MCF 10A (cell line): ENCODE measurements at regions of chr2 and their contacts with region 1.

Region 1: DNA sequence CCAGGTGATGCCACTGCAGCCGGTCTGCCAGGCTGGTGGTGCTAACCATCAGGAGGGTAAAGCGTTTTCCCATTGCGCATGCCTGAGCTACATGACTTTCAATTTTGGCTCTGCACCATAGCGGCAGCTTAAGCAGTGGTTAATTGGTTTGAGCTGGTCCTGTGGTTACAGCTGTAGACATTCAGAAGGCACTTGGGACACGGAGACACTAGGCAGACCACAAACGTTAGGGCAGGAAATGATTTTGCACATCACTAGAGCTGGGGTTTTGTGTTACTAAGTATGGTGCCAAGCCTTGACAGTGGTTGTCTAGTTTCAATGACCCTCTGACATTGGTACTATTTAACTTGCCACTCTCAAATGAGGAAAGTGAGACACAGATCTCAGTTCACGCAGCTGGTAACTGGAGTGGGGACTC is 28.9 kb upstream of the CNOT11 start:
- DNase-seq: no peak
- H3K4me3 Mint-ChIP-seq: no peak overlapping the region
- H3K27ac Mint-ChIP-seq: no peak overlapping the region
- H3K4me1 Mint-ChIP-seq: no peaks in the 10 kb centered on the region
- H3K27me3 Mint-ChIP-seq: no peaks in the 10 kb centered on the region
- CTCF ChIP-seq: no peak

Region 2: DNA sequence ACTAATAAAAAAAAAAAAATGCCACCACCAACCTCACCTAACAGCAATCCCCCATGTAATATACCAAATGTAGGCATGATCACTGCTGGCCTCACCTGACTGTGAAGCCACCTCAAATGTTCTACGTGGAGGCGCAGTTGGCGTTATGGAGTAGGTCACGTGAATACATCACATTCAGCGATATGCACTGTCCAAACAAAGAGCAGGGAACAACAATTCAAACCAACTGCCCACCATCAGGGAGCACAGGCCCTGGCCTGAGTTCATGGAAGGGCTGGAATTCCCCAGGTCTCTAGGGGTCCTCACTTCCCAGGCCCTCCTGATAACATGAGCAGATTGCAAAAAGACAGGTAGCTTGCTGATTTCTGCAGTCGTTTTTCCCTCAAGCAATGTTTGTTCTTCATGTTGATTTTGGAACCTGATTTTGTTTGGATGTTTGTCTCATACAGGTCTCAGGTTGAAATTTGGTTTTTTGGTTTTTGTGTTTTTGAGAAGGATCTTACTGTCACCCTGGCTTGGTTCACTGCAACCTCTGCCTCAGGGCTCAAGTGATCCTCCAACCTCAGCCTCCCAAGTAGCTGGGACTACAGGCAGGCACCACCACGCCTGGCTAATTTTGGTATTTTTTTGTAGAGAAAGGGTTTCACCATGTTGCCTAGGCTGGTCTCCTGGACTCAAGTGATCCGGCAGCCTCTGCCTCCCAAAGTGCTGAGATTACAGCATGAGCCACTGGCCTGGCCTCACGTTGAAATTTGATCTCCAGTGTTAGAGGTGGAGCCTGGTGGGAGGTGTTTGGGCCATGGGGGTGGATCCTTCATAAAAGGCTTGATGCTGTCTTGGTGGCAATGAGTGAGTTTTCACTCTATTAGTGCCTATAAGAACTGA is 88.2 kb before region 1 on chr2:
- CTCF ChIA-PET with region 1: no interaction called
- POLR2A ChIA-PET with region 1: no interaction called
- intact Hi-C with region 1: no loop called
- DNase-seq: peak; percentile 67
- H3K4me3 Mint-ChIP-seq: no peak overlapping the region
- H3K27ac Mint-ChIP-seq: no peak overlapping the region
- H3K4me1 Mint-ChIP-seq: peaks cover 38% of the 10 kb centered on the region
- H3K27me3 Mint-ChIP-seq: no peaks in the 10 kb centered on the region
- CTCF ChIP-seq: no peak

Region 3: GRCh38 chr2:101238930-101239759 is 15.3 kb after region 1 on chr2:
- CTCF ChIA-PET with region 1: interaction called, 10 read pairs
- POLR2A ChIA-PET with region 1: interaction called, 3 read pairs
- intact Hi-C with region 1: no loop called
- DNase-seq: peak; percentile 9
- H3K4me3 Mint-ChIP-seq: no peak overlapping the region
- H3K27ac Mint-ChIP-seq: no peak overlapping the region
- H3K4me1 Mint-ChIP-seq: peaks cover 8% of the 10 kb centered on the region
- H3K27me3 Mint-ChIP-seq: no peaks in the 10 kb centered on the region
- CTCF ChIP-seq: no peak

Region 4: GRCh38 chr2:101328474-101329007 is 104.7 kb after region 1 on chr2:
- CTCF ChIA-PET with region 1: no interaction called
- POLR2A ChIA-PET with region 1: no interaction called
- intact Hi-C with region 1: no loop called
- DNase-seq: peak; percentile 16
- H3K4me3 Mint-ChIP-seq: no peak overlapping the region
- H3K27ac Mint-ChIP-seq: no peak overlapping the region
- H3K4me1 Mint-ChIP-seq: no peaks in the 10 kb centered on the region
- H3K27me3 Mint-ChIP-seq: no peaks in the 10 kb centered on the region
- CTCF ChIP-seq: no peak

Region 5: GRCh38 chr2:101558740-101559519 is 335.1 kb after region 1 on chr2:
- CTCF ChIA-PET with region 1: no interaction called
- POLR2A ChIA-PET with region 1: no interaction called
- intact Hi-C with region 1: no loop called
- DNase-seq: no peak
- H3K4me3 Mint-ChIP-seq: no peak overlapping the region
- H3K27ac Mint-ChIP-seq: peak overlapping the region; percentile 70
- H3K4me1 Mint-ChIP-seq: no peaks in the 10 kb centered on the region
- H3K27me3 Mint-ChIP-seq: no peaks in the 10 kb centered on the region
- CTCF ChIP-seq: no peak